ENCODE measurements at regions of chr16 and their contacts with region 1.

Region 1: GRCh38 chr16:361872-362701 is 8.3 kb downstream of the MRPL28 start:
- DNase-seq: peak; percentile 85
- H3K4me3 Mint-ChIP-seq: peak overlapping the region; percentile 43
- H3K27ac Mint-ChIP-seq: no peak overlapping the region
- H3K4me1 Mint-ChIP-seq: peaks cover 6% of the 10 kb centered on the region
- H3K27me3 Mint-ChIP-seq: peaks cover 4% of the 10 kb centered on the region

Region 2: GRCh38 chr16:96935-97381 is 265.1 kb before region 1 on chr16:
- CTCF ChIA-PET with region 1: interaction called, 18 read pairs
- POLR2A ChIA-PET with region 1: no interaction called
- intact Hi-C with region 1: no loop called
- DNase-seq: peak; percentile 94
- H3K4me3 Mint-ChIP-seq: no peak overlapping the region
- H3K27ac Mint-ChIP-seq: no peak overlapping the region
- H3K4me1 Mint-ChIP-seq: peaks cover 3% of the 10 kb centered on the region
- H3K27me3 Mint-ChIP-seq: no peaks in the 10 kb centered on the region

Region 3: DNA sequence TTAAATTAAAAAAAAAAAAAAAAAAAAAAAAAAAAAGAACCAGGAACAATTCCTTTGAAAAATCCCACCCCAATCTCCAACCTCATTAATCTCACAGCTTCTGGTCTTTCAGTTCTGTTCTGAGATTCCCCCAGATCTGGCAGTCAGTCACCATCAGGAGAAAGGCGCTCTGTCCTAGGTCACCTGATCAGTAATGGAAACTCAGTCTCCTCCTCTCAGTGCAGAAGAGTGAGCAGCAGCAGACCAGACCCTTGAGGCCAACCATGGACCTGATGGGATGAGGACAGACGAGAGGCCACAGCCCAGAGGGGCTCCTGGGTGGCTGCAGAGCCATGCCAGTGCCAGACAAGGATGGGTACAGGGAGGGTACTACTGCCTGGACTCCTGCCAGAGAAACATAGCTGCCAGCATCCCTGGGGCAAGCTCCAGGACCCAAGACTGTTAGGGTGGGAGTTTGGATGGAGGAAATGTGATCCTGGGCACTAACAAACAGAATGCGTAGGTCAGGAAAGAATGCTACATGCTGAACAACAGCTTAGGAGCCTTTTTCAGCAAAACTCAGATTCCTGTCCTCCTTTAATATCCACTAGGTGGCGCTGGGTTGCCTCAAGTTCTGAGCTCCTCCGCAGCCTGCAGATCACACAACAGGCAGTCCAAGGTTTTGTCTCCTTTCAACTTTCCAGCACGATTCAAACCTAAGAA is 255.3 kb before region 1 on chr16:
- CTCF ChIA-PET with region 1: interaction called, 52 read pairs
- POLR2A ChIA-PET with region 1: no interaction called
- intact Hi-C with region 1: loop called (anchors 5 kb)
- DNase-seq: peak; percentile 62
- H3K4me3 Mint-ChIP-seq: no peak overlapping the region
- H3K27ac Mint-ChIP-seq: no peak overlapping the region
- H3K4me1 Mint-ChIP-seq: no peaks in the 10 kb centered on the region
- H3K27me3 Mint-ChIP-seq: no peaks in the 10 kb centered on the region

Region 4: GRCh38 chr16:117379-118365 is 244.4 kb before region 1 on chr16:
- CTCF ChIA-PET with region 1: interaction called, 34 read pairs
- POLR2A ChIA-PET with region 1: no interaction called
- intact Hi-C with region 1: no loop called
- DNase-seq: peak; percentile 63
- H3K4me3 Mint-ChIP-seq: no peak overlapping the region
- H3K27ac Mint-ChIP-seq: no peak overlapping the region
- H3K4me1 Mint-ChIP-seq: peaks cover 9% of the 10 kb centered on the region
- H3K27me3 Mint-ChIP-seq: no peaks in the 10 kb centered on the region

Region 5: GRCh38 chr16:180938-181667 is 181.0 kb before region 1 on chr16:
- CTCF ChIA-PET with region 1: interaction called, 14 read pairs
- POLR2A ChIA-PET with region 1: no interaction called
- intact Hi-C with region 1: no loop called
- DNase-seq: peak; percentile 89
- H3K4me3 Mint-ChIP-seq: peak overlapping the region; percentile 20
- H3K27ac Mint-ChIP-seq: no peak overlapping the region
- H3K4me1 Mint-ChIP-seq: no peaks in the 10 kb centered on the region
- H3K27me3 Mint-ChIP-seq: peaks cover 22% of the 10 kb centered on the region

Region 6: DNA sequence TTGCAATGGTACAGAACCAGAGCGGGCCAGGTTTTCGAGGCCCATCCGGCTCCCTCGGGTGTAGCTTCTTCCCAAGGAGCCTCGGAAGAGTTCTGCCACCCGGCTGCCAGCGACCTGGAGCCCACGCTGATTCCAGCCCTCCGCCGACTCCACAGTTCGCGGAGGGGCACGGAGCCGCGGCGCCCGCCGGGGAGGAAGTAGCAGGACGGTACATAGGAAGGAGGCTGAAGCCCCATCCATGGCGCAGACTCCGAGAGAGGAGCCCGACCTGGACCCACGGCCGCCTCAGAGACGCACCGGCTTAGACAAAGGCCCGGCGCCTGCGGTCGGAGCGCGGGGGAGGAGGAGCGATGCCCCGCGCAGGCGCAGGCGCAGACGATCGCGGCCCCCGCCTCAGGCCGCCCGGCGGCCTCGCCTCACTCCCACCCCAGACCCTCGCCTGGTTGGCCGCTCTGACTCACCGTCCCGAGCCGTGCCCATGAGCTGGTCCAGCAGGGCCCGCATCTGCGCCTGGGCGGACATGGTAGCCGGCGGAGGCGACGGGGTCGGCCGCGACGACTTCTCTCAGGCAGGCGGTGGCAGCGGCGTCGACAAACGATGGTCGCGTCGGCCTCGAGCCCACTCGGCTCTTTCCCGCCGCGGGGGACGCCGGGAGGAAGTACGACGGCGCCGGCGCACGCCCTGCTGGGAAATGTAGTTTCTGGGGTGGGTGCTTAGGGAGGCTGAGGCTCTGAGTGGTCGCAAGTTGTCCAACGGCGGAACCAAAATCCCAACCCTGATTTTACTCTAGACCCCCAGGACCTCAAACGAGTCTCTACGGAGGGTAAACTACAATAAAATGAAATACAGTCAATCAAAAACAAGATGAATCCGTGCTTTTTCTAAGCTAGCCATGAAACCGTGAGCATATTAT is 133.0 kb before region 1 on chr16 and contains the start of gene LUC7L:
- CTCF ChIA-PET with region 1: interaction called, 26 read pairs
- POLR2A ChIA-PET with region 1: interaction called, 3 read pairs
- intact Hi-C with region 1: no loop called
- DNase-seq: peak; percentile 91
- H3K4me3 Mint-ChIP-seq: peak within 1 kb of the TSS; percentile 89
- H3K27ac Mint-ChIP-seq: peak within 1 kb of the TSS; percentile 89
- H3K4me1 Mint-ChIP-seq: peaks cover 31% of the 10 kb centered on the region
- H3K27me3 Mint-ChIP-seq: no peaks in the 10 kb centered on the region
- total RNA-seq, gene LUC7L: 57.0 to 60.8 TPM

Region 7: GRCh38 chr16:346587-346986 is 15.5 kb before region 1 on chr16:
- CTCF ChIA-PET with region 1: interaction called, 10 read pairs
- POLR2A ChIA-PET with region 1: no interaction called
- intact Hi-C with region 1: no loop called
- DNase-seq: no peak
- H3K4me3 Mint-ChIP-seq: no peak overlapping the region
- H3K27ac Mint-ChIP-seq: no peak overlapping the region
- H3K4me1 Mint-ChIP-seq: peaks cover 76% of the 10 kb centered on the region
- H3K27me3 Mint-ChIP-seq: no peaks in the 10 kb centered on the region

Region 8: GRCh38 chr16:380990-381788 is 19.1 kb after region 1 on chr16:
- CTCF ChIA-PET with region 1: no interaction called
- POLR2A ChIA-PET with region 1: no interaction called
- intact Hi-C with region 1: no loop called
- DNase-seq: no peak
- H3K4me3 Mint-ChIP-seq: peak overlapping the region; percentile 68
- H3K27ac Mint-ChIP-seq: no peak overlapping the region
- H3K4me1 Mint-ChIP-seq: peaks cover 22% of the 10 kb centered on the region
- H3K27me3 Mint-ChIP-seq: no peaks in the 10 kb centered on the region

Region 9: GRCh38 chr16:391885-392335 is 29.8 kb after region 1 on chr16:
- CTCF ChIA-PET with region 1: no interaction called
- POLR2A ChIA-PET with region 1: no interaction called
- intact Hi-C with region 1: no loop called
- DNase-seq: peak; percentile 90
- H3K4me3 Mint-ChIP-seq: no peak overlapping the region
- H3K27ac Mint-ChIP-seq: peak overlapping the region; percentile 54
- H3K4me1 Mint-ChIP-seq: peaks cover 20% of the 10 kb centered on the region
- H3K27me3 Mint-ChIP-seq: no peaks in the 10 kb centered on the region